Panc1 (cell line): ENCODE measurements at regions of chr1 and their contacts with region 1.

Region 1: DNA sequence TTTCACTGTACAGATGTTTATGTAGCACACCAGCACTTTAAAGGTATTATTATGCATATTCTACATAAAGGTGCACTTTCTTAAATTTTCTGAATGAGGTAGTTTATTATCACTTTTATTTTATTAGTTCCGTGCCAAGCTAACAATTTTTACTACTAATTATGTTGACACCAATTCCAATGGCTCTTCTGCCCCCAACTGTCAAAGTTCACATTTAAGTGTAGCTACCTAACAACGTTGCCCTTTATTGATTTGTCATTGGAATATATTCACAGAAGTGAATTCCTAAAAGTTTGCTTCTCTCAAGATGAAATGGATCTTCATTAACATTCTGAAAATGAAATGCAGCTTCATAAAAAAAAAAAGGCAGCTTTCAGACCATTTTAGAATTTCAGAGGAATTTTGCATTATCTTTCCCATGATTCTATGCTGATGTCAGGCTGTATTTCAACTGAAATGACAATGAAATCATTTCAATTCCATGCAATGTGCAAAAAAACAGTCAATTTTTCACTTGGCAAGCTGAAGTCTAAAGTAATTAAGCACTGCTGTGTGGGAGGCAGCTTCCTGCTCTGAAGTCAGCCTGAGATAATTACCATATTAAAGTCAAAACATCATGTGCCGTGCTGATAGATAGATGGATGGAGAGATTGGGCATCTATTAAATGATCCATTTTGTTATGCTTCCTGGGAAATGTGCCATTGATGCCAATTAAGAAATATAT is 229.2 kb downstream of the TTLL7 start:
- DNase-seq: no peak
- ATAC-seq: no peak
- H3K4me3 ChIP-seq: no peak overlapping the region
- H3K27ac ChIP-seq: no peak overlapping the region
- H3K4me1 ChIP-seq: no peaks in the 10 kb centered on the region
- H3K27me3 ChIP-seq: peaks cover 12% of the 10 kb centered on the region
- CTCF ChIP-seq: no peak; the same call in 1 of the 2 replicates

Region 2: DNA sequence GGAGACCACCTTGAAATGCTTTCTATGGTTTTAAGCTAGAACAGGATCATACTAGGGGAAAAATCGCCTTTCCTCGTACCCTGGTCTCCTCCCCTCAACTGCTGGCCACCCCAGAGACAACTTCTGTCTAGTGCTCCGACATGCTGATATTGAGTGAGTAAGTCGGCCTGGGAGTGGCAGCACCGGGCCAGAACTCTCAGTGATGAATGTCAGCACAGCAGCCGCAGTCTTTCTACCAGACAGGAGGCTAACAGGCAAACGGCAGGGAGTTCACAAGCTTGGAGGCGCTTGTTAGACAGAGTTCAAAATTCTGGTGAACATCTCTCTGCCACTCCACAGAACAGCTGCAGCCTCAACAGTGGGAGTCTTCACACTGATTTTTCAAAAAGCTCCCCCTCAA is 1252.2 kb before region 1 on chr1:
- CTCF ChIA-PET with region 1: no interaction called
- POLR2A ChIA-PET with region 1: interaction called, 12 read pairs
- in situ Hi-C with region 1: no loop called
- intact Hi-C with region 1: no loop called
- DNase-seq: no peak
- ATAC-seq: peak; percentile 68; the same call in 1 of the 2 replicates
- H3K4me3 ChIP-seq: no peak overlapping the region
- H3K27ac ChIP-seq: no peak overlapping the region
- H3K4me1 ChIP-seq: no peaks in the 10 kb centered on the region
- H3K27me3 ChIP-seq: no peaks in the 10 kb centered on the region
- CTCF ChIP-seq: no peak

Region 3: GRCh38 chr1:83799594-83799993 is 29.8 kb after region 1 on chr1:
- CTCF ChIA-PET with region 1: no interaction called
- POLR2A ChIA-PET with region 1: no interaction called
- in situ Hi-C with region 1: no loop called
- intact Hi-C with region 1: no loop called
- DNase-seq: no peak
- ATAC-seq: no peak
- H3K4me3 ChIP-seq: no peak overlapping the region
- H3K27ac ChIP-seq: no peak overlapping the region
- H3K4me1 ChIP-seq: no peaks in the 10 kb centered on the region
- H3K27me3 ChIP-seq: no peaks in the 10 kb centered on the region; the same call in 1 of the 2 replicates
- CTCF ChIP-seq: no peak

Region 4: DNA sequence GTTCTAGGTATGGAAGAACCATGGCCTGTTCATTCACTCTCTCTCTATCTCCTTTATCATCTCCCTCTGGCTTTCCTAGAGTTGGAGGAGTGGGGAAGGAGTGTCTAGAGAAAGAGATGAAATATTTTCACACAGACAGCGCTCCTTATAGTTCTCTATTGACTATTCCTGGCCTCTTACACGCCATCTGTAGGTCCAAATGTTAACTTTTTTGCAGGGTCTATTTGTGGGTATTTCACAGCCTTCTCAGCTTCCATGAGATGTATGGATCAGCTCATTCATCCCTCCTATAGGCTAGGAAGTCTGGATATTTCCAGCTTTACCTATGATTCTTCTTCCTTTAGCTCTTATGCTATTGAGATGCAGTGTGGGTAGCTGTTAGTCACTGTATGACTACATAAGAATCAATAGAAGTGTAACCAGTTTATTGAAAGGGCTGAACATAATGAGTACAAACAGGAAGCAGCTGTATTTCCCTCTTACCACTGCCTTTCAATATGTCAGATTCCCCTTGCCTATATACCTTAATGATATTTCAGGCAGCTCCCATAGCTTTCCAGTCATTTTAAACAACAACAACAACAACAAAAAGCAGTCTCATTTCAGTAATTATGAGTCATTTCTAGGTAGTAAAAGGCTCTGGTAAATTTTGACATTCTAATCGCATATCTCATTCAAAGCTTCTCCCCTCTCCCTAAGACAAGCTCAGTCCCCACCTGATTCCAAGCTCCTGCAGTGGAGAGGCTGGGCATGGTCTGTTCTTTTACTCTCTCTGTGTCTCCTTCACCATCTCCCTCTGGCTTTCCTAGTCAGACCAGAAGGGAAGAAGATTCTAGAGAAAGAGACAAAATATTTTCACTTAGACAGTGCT is 79.7 kb after region 1 on chr1:
- CTCF ChIA-PET with region 1: no interaction called
- POLR2A ChIA-PET with region 1: no interaction called
- in situ Hi-C with region 1: no loop called
- intact Hi-C with region 1: no loop called
- DNase-seq: no peak
- ATAC-seq: peak; percentile 44; the same call in 1 of the 2 replicates
- H3K4me3 ChIP-seq: no peak overlapping the region
- H3K27ac ChIP-seq: no peak overlapping the region
- H3K4me1 ChIP-seq: no peaks in the 10 kb centered on the region
- H3K27me3 ChIP-seq: peaks cover 29% of the 10 kb centered on the region
- CTCF ChIP-seq: peak; percentile 23; the same call in 1 of the 2 replicates